ENCODE measurements at regions of chr6 and their contacts with region 1.

Region 1: DNA sequence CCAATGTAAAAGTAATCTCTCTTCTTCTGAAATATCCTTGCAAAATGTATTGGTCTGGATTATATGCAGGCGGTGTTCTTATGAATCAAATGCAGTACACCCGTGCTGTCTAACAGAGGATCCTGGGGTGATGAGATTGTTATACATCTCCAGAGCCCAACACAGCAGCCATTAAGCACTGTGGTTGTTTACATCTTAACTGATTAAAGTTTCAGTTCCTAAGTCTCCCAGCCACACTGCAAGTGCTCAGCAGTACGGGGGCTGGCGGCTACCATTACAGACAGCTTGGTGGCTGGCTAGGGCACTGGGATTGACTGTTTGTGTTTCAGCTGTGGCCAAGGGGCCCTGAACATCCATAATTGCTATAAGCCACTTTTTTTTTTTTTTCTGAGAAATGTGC is 7.0 kb downstream of the UNC93A start:
- DNase-seq: no peak
- ATAC-seq: no peak
- H3K4me3 ChIP-seq: no peak overlapping the region
- H3K4me3 Mint-ChIP-seq: no peak overlapping the region
- H3K27ac ChIP-seq: no peak overlapping the region
- H3K27ac Mint-ChIP-seq: no peak overlapping the region
- H3K4me1 ChIP-seq: no peaks in the 10 kb centered on the region
- H3K4me1 Mint-ChIP-seq: no peaks in the 10 kb centered on the region
- H3K27me3 ChIP-seq: no peaks in the 10 kb centered on the region
- H3K27me3 Mint-ChIP-seq: peaks cover 9% of the 10 kb centered on the region
- CTCF ChIP-seq: no peak

Region 2: DNA sequence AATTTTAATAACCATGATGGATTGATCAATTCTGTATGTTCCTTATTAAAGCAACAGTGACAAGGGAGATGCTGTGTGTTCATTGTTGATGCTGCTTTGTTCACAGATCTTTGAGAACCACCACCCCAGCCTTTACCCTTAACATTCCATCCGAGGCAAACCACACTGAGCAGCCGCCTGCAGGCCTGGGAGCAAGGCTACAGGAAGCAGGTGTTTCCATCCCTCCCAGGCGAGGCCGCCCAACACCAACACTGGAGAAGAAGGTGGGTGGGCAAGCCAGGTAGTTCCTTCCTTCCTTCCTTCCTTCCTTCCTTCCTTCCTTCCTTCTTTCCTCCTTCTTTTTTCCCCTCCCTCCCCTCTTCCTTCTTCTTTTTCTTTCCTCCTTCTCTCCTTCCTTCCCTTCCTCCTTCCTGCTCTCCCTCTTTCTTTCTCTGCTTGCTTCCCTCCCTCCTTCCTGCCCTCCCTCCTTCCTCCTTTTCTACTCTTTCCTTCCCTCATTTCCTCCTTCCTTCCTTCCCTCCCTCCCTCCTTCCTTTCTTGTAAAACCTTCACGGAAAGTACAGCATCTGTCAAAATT is 40.5 kb after region 1 on chr6:
- CTCF ChIA-PET with region 1: no interaction called
- POLR2A ChIA-PET with region 1: no interaction called
- intact Hi-C with region 1: no loop called
- DNase-seq: no peak
- ATAC-seq: no peak
- H3K4me3 ChIP-seq: no peak overlapping the region
- H3K4me3 Mint-ChIP-seq: no peak overlapping the region
- H3K27ac ChIP-seq: no peak overlapping the region
- H3K27ac Mint-ChIP-seq: no peak overlapping the region
- H3K4me1 ChIP-seq: no peaks in the 10 kb centered on the region
- H3K4me1 Mint-ChIP-seq: no peaks in the 10 kb centered on the region
- H3K27me3 ChIP-seq: peaks cover 0 to 8% of the 10 kb centered on the region in 2 experiments
- H3K27me3 Mint-ChIP-seq: peaks cover 10% of the 10 kb centered on the region
- CTCF ChIP-seq: no peak

Region 3: DNA sequence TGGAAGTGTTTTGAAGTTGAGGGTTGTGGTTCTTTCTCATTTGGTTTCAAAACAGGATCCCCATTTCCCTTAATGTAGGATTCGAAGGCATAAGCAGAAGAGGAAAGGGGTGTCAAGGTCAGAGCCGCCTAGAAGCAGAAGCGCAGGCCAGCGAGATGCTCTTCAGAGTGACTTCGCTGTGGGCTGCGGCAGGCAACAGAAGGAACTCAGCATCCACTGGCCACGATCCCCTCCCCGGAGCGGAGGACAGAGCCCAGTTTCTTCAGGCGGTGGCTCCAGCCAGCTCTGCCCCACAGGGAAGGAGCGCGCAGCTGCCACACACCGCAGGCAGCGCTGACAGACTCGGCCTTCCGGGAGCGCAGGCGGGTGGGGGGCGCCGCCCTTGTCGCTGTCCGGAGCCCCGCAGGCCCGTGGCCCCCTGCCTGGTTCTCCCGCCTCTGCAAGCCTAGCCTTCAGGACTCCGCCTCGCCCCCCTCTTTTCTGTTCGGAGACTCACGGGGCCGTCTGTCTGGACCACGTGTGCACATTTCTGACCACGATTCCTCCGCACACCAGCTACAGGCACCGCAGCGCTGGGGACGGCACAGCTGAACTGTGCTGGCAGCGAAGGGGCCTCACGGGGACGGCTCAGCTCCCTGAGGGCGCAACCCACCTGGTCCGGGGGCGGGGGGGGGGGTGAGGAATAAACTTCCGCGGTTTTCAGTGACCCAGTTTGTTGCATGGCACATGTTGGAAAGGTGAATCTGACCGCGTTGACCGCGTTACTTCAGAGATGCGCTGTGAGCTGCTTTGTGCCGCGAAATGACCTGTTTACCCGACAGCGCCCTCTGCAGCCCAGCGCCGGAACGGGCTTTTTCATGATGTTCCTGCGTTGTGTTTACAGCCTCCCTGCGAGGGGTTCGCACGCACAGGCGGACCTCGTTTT is 52.8 kb after region 1 on chr6:
- CTCF ChIA-PET with region 1: interaction called, 3 read pairs
- POLR2A ChIA-PET with region 1: interaction called, 3 read pairs
- intact Hi-C with region 1: loop called in 1 of 2 experiments (anchors 10 kb)
- DNase-seq: peak; percentile 66 to 90 (median 79)
- ATAC-seq: peak; percentile 78
- H3K4me3 ChIP-seq: peak overlapping the region; percentile 58 to 62
- H3K4me3 Mint-ChIP-seq: peak overlapping the region; percentile 89
- H3K27ac ChIP-seq: no peak overlapping the region
- H3K27ac Mint-ChIP-seq: peak overlapping the region; percentile 46
- H3K4me1 ChIP-seq: peaks cover 10% of the 10 kb centered on the region
- H3K4me1 Mint-ChIP-seq: peaks cover 12% of the 10 kb centered on the region
- H3K27me3 ChIP-seq: peaks cover 0 to 3% of the 10 kb centered on the region in 2 experiments
- H3K27me3 Mint-ChIP-seq: peaks cover 7% of the 10 kb centered on the region
- CTCF ChIP-seq: peak; percentile 86

Measured in CD8-positive, alpha-beta T cell (primary cell).